Caco-2 (cell line): ENCODE measurements at regions of chr7 and their contacts with region 1.

Region 1: GRCh38 chr7:44962483-44963251 is 16.1 kb downstream of the MYO1G start:
- DNase-seq: peak; percentile 63 to 67
- H3K4me3 ChIP-seq: peak overlapping the region; percentile 75
- H3K4me3 Mint-ChIP-seq: peak overlapping the region; percentile 68
- H3K27ac Mint-ChIP-seq: no peak overlapping the region
- H3K4me1 ChIP-seq: no peaks in the 10 kb centered on the region
- H3K4me1 Mint-ChIP-seq: no peaks in the 10 kb centered on the region
- H3K27me3 ChIP-seq: no peaks in the 10 kb centered on the region; the same call in 1 of the 2 replicates
- H3K27me3 Mint-ChIP-seq: no peaks in the 10 kb centered on the region
- CTCF ChIP-seq: peak in 1 of 2 experiments; percentile 37

Region 2: DNA sequence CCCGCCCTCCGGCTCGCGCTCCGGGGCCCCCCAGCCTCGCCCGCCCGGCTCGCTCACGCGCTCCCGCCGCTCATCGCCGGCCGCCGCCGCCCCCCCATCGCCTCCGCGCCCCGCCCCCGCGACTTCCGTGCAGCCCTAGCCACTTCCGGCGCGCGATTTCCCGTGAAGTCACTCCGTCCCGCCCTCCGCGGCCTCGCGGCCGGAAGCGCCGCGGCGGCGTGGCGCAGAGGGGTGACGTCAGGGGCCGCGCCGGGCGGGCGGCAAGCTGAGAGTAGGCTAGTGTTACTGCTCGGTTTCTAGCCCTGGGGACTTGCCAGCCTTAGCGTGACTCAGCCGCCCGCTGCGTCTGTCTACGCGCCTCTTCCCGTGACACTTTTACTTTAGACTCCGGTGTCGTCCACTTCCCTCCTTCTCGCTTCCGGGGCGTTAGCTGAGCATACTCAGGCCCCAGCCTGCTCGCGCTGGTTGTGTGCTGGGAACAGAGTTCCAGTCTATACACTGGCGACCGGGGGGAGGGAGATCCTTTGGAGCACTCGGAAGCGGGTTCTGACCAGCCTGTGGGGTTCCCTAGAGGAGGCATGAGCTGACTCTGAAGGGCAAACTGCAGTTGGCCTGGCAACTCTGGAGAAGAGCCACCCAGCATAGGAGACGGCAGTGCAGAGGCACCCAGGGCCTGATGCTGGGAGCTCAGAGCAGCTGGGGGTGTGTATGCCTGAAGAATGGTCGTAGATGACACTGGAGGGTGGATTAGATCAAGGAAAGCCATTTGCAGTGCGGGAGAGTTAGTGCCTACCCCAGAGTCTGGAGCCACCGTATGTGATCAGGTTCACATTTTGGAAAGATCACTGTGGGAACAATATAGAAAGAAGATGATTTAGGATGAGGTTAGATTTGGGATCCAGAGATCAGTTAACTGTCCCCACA is 77.0 kb before region 1 on chr7 and contains the start of gene PURB:
- CTCF ChIA-PET with region 1: interaction called, 3 read pairs
- POLR2A ChIA-PET with region 1: no interaction called
- intact Hi-C with region 1: loop called (anchors 5 kb)
- DNase-seq: peak; percentile 92 to 95
- H3K4me3 ChIP-seq: peak within 1 kb of the TSS; percentile 78
- H3K4me3 Mint-ChIP-seq: peak within 1 kb of the TSS; percentile 96
- H3K27ac Mint-ChIP-seq: peak within 1 kb of the TSS; percentile 100
- H3K4me1 ChIP-seq: peaks cover 26% of the 10 kb centered on the region
- H3K4me1 Mint-ChIP-seq: peaks cover 17% of the 10 kb centered on the region
- H3K27me3 ChIP-seq: no peaks in the 10 kb centered on the region
- H3K27me3 Mint-ChIP-seq: no peaks in the 10 kb centered on the region
- CTCF ChIP-seq: no peak
- total RNA-seq, gene PURB: 25.1 and 26.3 TPM in 2 replicates